ENCODE measurements at regions of chr12 and their contacts with region 1.

Region 1: DNA sequence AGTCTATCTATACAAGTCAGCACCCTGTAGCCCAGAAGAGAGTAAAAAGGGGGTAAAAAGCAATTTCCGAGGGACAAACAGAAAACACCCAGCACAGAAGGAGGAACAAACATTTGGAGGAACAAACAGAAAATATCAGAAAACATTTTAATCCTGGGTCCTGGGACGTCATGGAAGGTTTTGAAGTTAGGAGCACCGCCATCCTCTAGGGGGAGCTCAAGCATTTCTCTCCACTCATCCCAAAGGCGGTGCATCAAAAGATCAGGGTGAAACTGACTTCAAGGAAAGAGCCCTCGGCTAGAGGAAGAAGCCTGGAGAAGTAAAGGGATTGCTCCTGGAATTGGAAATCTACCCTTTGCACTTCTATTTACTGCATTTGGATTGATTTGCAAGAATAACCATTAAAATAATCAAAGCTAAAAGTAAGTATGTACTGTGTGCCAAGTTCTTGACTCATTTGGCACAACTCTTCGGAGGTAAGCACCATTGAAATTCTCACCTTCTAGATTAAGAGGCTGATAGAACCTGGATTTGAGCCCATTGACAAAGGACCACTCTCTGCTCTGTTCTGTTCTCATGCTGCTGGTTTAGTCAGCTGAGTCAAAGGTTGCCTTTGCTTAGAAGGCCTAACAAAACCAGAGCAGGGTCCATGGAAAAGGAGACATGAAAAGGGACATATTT is 17.2 kb upstream of the POC1B start:
- DNase-seq: peak; percentile 38
- ATAC-seq: peak; percentile 94
- H3K4me3 ChIP-seq: no peak overlapping the region
- H3K27ac ChIP-seq: no peak overlapping the region
- H3K4me1 ChIP-seq: peaks cover 4% of the 10 kb centered on the region; the same call in 1 of the 2 replicates
- H3K27me3 ChIP-seq: no peaks in the 10 kb centered on the region
- CTCF ChIP-seq: peak; percentile 86 to 91 (median 89)
- EP300 ChIP-seq: no peak
- POLR2A ChIP-seq: no peak
- RAD21 ChIP-seq: peak; percentile 99

Region 2: DNA sequence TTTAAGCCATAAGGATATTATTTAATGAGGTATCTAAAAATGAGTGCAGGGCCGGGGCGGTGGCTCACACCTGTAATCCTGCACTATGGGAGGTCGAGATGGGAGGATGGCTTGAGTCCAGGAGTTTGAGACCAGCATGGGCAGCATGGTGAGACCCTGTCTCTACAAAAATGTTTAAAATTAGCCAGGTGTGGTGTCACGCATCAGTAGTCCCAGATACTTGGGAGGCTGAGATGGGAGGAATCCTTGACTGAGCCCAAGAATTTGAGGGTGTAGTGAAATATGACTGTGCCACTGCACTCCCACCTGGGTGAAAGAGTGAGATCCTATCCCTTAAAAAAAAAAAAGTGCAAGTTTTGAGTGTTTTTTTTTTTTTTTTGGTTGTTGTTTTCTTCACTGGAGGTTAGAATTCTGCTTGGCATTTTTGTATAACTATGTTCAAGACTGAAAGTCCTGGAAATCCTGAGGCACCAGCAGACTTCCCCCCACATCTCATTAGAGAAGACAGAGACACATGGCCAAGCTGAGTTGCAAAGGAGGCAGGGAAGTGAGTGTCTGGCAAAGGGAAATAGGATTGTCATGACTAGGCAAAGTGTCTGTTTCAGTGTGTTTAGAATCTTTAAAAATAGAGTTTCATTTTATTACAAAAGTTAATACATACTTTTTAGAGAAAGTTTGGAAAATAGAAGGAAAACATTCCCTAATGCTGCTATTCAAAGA is 137.3 kb before region 1 on chr12:
- CTCF ChIA-PET with region 1: no interaction called
- POLR2A ChIA-PET with region 1: no interaction called
- RAD21 ChIA-PET with region 1: no interaction called
- SMC1A ChIA-PET with region 1: no interaction called
- in situ Hi-C with region 1: no loop called
- intact Hi-C with region 1: no loop called
- DNase-seq: no peak
- ATAC-seq: no peak
- H3K4me3 ChIP-seq: no peak overlapping the region
- H3K27ac ChIP-seq: no peak overlapping the region
- H3K4me1 ChIP-seq: no peaks in the 10 kb centered on the region
- H3K27me3 ChIP-seq: no peaks in the 10 kb centered on the region
- CTCF ChIP-seq: no peak
- EP300 ChIP-seq: no peak
- POLR2A ChIP-seq: no peak
- RAD21 ChIP-seq: no peak

Region 3: DNA sequence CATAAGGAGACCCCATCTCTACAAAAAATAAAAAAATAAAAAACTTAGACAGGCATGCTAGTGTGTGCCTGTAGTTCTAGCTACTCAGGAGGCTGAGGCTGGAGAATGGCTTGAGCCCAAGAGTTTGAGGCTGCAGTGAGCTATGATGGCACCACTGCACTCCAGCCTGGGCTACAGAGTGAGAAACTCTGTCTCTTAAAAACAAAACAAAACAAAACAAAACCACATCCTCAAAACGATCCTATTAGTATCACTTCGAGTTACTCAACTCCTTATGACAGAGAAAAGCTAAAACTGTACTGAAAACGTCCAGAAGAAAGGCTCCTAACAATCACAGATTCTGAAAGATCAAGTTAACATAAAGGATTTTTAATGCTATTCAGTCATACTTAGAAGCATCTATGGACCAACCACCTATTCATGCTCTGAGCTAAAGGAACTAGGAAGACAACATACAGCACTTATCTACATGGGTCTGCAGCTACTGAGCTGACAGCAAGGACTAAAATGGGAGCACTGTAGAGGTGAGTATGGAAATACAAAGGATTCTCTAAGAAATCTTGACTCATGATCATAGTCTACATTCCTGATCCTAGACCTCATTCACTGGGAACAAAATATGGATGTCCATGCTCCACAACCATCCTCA is 115.4 kb before region 1 on chr12:
- CTCF ChIA-PET with region 1: no interaction called
- POLR2A ChIA-PET with region 1: no interaction called
- RAD21 ChIA-PET with region 1: no interaction called
- SMC1A ChIA-PET with region 1: no interaction called
- in situ Hi-C with region 1: no loop called
- intact Hi-C with region 1: no loop called
- DNase-seq: peak; percentile 7
- ATAC-seq: peak; percentile 86
- H3K4me3 ChIP-seq: no peak overlapping the region
- H3K27ac ChIP-seq: no peak overlapping the region
- H3K4me1 ChIP-seq: peaks cover 5% of the 10 kb centered on the region; the same call in 1 of the 2 replicates
- H3K27me3 ChIP-seq: no peaks in the 10 kb centered on the region
- CTCF ChIP-seq: no peak
- EP300 ChIP-seq: no peak
- POLR2A ChIP-seq: no peak
- RAD21 ChIP-seq: no peak

Region 4: GRCh38 chr12:89524541-89525285 is 18.3 kb before region 1 on chr12 and contains the start of gene GALNT4:
- CTCF ChIA-PET with region 1: interaction called, 15 read pairs
- POLR2A ChIA-PET with region 1: no interaction called
- RAD21 ChIA-PET with region 1: interaction called, 3 read pairs
- SMC1A ChIA-PET with region 1: interaction called, 5 read pairs
- in situ Hi-C with region 1: no loop called
- intact Hi-C with region 1: no loop called
- DNase-seq: peak; percentile 42
- ATAC-seq: peak; percentile 86
- H3K4me3 ChIP-seq: peak within 1 kb of the TSS; percentile 96
- H3K27ac ChIP-seq: peak within 1 kb of the TSS; percentile 82
- H3K4me1 ChIP-seq: peaks cover 14% of the 10 kb centered on the region
- H3K27me3 ChIP-seq: no peaks in the 10 kb centered on the region
- CTCF ChIP-seq: peak; percentile 55 to 75 (median 61)
- EP300 ChIP-seq: no peak
- POLR2A ChIP-seq: peak; percentile 65
- RAD21 ChIP-seq: peak; percentile 69
- polyA plus RNA-seq, gene GALNT4: 0.90 to 1.1 TPM

Region 5: DNA sequence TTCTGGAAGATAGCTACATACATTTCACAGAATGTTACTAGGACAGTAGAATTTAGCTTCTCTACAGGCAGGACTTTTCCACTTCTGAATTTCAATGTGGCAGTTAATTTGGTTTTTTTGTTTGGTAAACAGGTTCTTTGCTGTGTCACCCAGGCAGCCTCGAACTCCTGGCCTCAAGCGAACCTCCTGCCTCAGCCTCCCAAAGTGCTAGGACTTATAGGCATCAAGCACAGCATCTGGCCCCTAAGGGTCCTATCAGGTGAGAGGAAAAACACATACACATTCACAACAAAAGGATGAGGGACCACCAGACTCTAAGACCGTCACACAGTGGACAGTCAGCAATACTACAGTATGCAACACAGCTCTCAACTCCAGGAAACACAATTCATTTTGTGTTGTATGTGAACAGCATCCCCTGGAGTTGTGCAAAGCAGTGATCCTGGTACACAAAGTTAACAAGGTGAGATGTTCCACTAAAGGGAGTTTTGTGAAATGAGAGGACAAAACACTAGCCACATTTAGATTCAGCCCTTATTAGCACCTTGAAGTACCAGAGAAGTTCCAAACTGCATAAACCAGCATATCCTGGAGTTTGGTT is 158.7 kb after region 1 on chr12:
- CTCF ChIA-PET with region 1: interaction called, 13 read pairs
- POLR2A ChIA-PET with region 1: no interaction called
- RAD21 ChIA-PET with region 1: interaction called, 7 read pairs
- SMC1A ChIA-PET with region 1: interaction called, 18 read pairs
- in situ Hi-C with region 1: no loop called
- intact Hi-C with region 1: loop called (anchors 5 kb)
- DNase-seq: no peak
- ATAC-seq: peak; percentile 10
- H3K4me3 ChIP-seq: no peak overlapping the region
- H3K27ac ChIP-seq: no peak overlapping the region
- H3K4me1 ChIP-seq: peaks cover 8% of the 10 kb centered on the region
- H3K27me3 ChIP-seq: no peaks in the 10 kb centered on the region
- CTCF ChIP-seq: peak in 2 of 3 experiments; percentile 20 to 35; a peak in 4 of 6 replicates
- EP300 ChIP-seq: no peak
- POLR2A ChIP-seq: no peak
- RAD21 ChIP-seq: no peak

Region 6: GRCh38 chr12:89882050-89882449 is 339.0 kb after region 1 on chr12:
- CTCF ChIA-PET with region 1: interaction called, 4 read pairs
- POLR2A ChIA-PET with region 1: no interaction called
- RAD21 ChIA-PET with region 1: no interaction called
- SMC1A ChIA-PET with region 1: interaction called, 7 read pairs
- in situ Hi-C with region 1: no loop called
- intact Hi-C with region 1: loop called (anchors 5 kb)
- DNase-seq: peak; percentile 55
- ATAC-seq: peak; percentile 80
- H3K4me3 ChIP-seq: no peak overlapping the region
- H3K27ac ChIP-seq: peak overlapping the region; percentile 99
- H3K4me1 ChIP-seq: peaks cover 40% of the 10 kb centered on the region
- H3K27me3 ChIP-seq: no peaks in the 10 kb centered on the region
- CTCF ChIP-seq: no peak
- EP300 ChIP-seq: peak; percentile 60 to 64; a peak in 2 of 4 replicates
- POLR2A ChIP-seq: no peak
- RAD21 ChIP-seq: peak; percentile 20; the same call in 1 of the 2 replicates

Region 7: GRCh38 chr12:90020014-90020413 is 477.0 kb after region 1 on chr12:
- CTCF ChIA-PET with region 1: interaction called, 70 read pairs
- POLR2A ChIA-PET with region 1: no interaction called
- RAD21 ChIA-PET with region 1: interaction called, 43 read pairs
- SMC1A ChIA-PET with region 1: interaction called, 64 read pairs
- in situ Hi-C with region 1: no loop called
- intact Hi-C with region 1: no loop called
- DNase-seq: no peak
- ATAC-seq: no peak
- H3K4me3 ChIP-seq: no peak overlapping the region
- H3K27ac ChIP-seq: no peak overlapping the region
- H3K4me1 ChIP-seq: no peaks in the 10 kb centered on the region
- H3K27me3 ChIP-seq: no peaks in the 10 kb centered on the region
- CTCF ChIP-seq: no peak
- EP300 ChIP-seq: no peak
- POLR2A ChIP-seq: no peak
- RAD21 ChIP-seq: no peak

Region 8: DNA sequence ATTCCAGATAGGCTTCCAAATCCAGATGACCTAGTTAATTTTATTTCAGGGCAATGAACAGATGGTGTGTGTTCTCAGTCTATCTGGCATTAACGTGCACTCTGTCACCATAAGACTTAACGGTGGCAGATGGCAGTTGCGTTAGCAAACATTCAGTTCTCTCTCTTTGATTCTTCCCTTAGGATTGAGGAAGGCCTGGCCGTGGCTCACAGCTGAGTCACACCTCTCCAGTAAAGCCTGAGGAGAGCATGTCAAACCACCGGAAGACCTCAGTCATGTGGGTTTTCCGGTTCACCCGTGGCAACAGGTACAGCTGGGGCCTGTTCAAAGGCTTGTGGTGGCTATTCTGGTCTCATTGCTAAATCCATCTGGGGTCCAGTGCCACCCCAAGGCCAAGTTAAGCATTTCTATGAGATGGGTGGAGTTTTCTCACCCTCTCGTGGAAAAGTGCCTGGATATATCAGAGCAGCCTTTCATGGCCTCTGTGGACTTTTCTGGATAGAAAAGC is 710.7 kb after region 1 on chr12:
- CTCF ChIA-PET with region 1: interaction called, 7 read pairs
- POLR2A ChIA-PET with region 1: no interaction called
- RAD21 ChIA-PET with region 1: no interaction called
- SMC1A ChIA-PET with region 1: no interaction called
- in situ Hi-C with region 1: loop called (anchors 10 kb)
- intact Hi-C with region 1: loop called (anchors 1 kb)
- DNase-seq: peak; percentile 59
- ATAC-seq: peak; percentile 99
- H3K4me3 ChIP-seq: no peak overlapping the region
- H3K27ac ChIP-seq: no peak overlapping the region
- H3K4me1 ChIP-seq: peaks cover 5% of the 10 kb centered on the region; the same call in 1 of the 2 replicates
- H3K27me3 ChIP-seq: no peaks in the 10 kb centered on the region
- CTCF ChIP-seq: peak; percentile 39 to 47 (median 39); a peak in 5 of 6 replicates
- EP300 ChIP-seq: peak in 1 of 2 experiments; percentile 62; a peak in 1 of 4 replicates
- POLR2A ChIP-seq: no peak
- RAD21 ChIP-seq: peak; percentile 73

Measured in GM12878 (cell line).